Esophagus muscularis mucosa (tissue), 4 donors: ENCODE measurements at regions of chr2 and their contacts with region 1.

Region 1: GRCh38 chr2:167147271-167147941 is 259.1 kb downstream of the XIRP2 start:
- DNase-seq: no peak
- H3K4me3 ChIP-seq: no peak overlapping the region
- H3K27ac ChIP-seq: no peak overlapping the region
- H3K4me1 ChIP-seq: peaks cover 0 to 7% (median 0%) of the 10 kb centered on the region in 4 donors
- H3K27me3 ChIP-seq: no peaks in the 10 kb centered on the region
- CTCF ChIP-seq: no peak
- EP300 ChIP-seq: no peak
- POLR2A ChIP-seq: no peak

Region 2: DNA sequence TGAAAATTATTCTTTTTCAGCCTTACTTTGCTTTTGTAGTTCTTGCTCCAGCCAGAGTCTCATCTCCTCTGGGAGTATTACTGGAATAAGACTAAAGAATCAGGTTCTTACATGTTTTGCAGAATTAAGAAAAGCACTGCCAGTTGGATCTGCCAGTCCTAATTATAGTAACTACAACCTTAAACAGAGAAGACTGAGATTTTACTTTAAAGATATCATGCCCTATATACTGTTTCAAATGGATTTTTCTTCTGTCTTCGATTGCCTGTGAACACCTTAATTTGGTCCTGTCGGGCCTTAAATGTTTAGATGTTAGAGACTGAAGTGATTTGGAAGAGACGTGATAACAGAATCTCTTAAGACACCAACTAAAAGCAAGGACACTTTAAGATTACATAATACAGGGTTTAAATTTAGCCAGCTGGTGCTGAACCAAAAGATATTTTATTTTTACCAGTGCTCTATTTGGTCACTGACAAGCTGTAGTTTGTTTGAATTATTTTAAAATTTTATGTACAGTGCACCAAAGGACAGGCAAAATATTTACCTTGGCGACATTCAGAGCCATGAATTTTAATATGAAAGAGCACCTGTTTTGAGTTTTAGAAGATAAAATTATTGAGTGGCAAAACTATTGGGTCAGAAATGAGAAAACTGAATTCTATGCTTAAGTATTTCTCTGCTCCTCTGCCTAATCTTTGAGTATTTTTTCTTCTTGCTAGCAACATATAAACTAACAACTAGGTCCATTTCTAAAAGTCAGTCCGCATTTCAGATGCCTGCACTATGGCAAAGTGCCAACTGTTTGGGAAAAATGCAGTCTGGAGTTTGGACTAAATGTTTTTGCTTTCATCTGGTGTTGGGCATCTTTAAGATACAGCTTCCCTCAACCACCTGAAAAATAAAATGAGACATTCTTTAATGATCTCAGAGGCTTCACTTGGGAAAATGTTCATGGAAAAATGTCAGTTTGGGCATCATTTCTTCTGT is 40.9 kb after region 1 on chr2:
- intact Hi-C with region 1: loop called (anchors 5 kb)
- DNase-seq: no peak
- H3K4me3 ChIP-seq: no peak overlapping the region
- H3K27ac ChIP-seq: peak overlapping the region; percentile 28 to 56 (median 36)
- H3K4me1 ChIP-seq: peaks cover 9 to 58% (median 44%) of the 10 kb centered on the region in 4 donors
- H3K27me3 ChIP-seq: no peaks in the 10 kb centered on the region
- CTCF ChIP-seq: no peak
- EP300 ChIP-seq: no peak
- POLR2A ChIP-seq: no peak